A549 (cell line): ENCODE measurements at regions of chr11 and their contacts with region 1.

Region 1: DNA sequence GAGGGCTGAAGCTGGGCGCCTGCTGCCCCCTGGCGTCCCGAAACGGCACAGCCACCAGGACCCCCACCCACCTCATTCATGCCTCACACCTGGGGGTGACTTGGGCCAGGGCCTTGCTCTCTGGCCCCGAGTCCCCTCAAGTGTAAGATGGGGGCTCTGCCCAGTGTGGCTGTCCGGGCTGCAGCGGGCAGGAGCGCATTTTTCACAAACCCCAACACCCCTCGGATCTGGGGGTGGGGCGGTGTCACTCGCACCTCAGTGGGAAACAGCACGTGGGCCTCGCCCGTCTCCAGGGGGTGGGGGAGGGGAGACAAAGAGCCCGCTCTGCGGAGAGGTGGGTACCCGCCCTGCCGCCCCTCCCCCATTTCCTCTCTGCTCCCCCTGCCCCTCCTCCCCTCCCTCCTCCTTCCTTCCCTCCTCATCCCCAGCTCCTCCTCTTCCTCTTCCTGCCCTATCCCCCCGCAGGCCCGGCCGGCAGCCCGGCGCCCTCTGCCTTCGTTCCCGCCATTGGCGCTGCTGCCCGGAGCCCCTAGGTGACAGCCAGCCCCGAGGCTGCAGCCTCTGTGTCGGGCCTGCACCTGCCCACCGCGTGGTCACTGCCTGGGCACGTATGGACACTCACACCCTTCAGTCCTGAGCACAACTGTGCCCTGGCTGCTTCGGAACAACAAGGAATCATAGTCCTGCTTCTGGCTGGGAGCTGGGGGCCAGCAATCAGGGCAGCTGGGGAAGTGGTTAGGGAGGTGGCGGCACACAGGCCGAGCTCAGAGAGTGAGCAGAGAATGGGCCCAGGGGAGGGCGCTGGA is 6.8 kb upstream of the CDKN1C start:
- DNase-seq: peak; percentile 49 to 74
- ATAC-seq: peak; percentile 42 to 74
- H3K4me3 ChIP-seq: peak overlapping the region; percentile 42
- H3K27ac ChIP-seq: peak overlapping the region; percentile 74 to 90
- H3K4me1 ChIP-seq: peaks cover 16% of the 10 kb centered on the region
- CTCF ChIP-seq: peak; percentile 83
- EP300 ChIP-seq: no peak
- POLR2A ChIP-seq: peak; percentile 28; the same call in 1 of the 2 replicates
- RAD21 ChIP-seq: peak; percentile 81 to 83

Region 2: GRCh38 chr11:2428322-2428795 is 464.1 kb before region 1 on chr11:
- CTCF ChIA-PET with region 1: interaction called, 31 read pairs
- POLR2A ChIA-PET with region 1: no interaction called
- DNase-seq: peak; percentile 56 to 68
- ATAC-seq: peak; percentile 49 to 92; a peak in 3 of 6 replicates
- H3K4me3 ChIP-seq: no peak overlapping the region
- H3K27ac ChIP-seq: no peak overlapping the region
- H3K4me1 ChIP-seq: no peaks in the 10 kb centered on the region
- CTCF ChIP-seq: peak; percentile 62
- EP300 ChIP-seq: no peak
- POLR2A ChIP-seq: no peak
- RAD21 ChIP-seq: peak; percentile 87 to 95

Region 3: DNA sequence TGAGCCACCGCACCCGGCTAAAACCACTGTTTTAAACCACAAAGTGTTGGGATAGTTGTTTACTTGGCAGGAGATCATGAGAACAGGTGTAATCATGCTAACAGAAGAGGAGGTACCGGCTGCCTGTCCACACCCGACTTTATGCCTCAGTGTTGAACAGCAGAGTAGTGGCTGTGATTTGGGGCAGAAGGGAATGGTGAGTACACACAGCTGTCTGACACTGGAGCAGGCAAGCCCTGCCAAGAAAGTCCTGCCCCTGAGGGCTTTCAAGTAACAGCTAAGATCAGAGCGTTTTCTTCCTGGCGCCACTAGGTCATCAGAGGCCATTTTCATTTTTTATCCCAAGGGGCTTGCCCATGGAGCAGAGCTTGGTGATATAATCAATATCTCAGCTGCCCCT is 14.9 kb before region 1 on chr11:
- CTCF ChIA-PET with region 1: interaction called, 25 read pairs
- POLR2A ChIA-PET with region 1: no interaction called
- DNase-seq: no peak
- ATAC-seq: no peak
- H3K4me3 ChIP-seq: no peak overlapping the region
- H3K27ac ChIP-seq: no peak overlapping the region
- H3K4me1 ChIP-seq: no peaks in the 10 kb centered on the region
- CTCF ChIP-seq: no peak
- EP300 ChIP-seq: no peak
- POLR2A ChIP-seq: no peak
- RAD21 ChIP-seq: no peak

Region 4: GRCh38 chr11:2924381-2924780 is 32.0 kb after region 1 on chr11:
- CTCF ChIA-PET with region 1: interaction called, 57 read pairs
- POLR2A ChIA-PET with region 1: interaction called, 41 read pairs
- DNase-seq: peak in 1 of 2 experiments; percentile 31
- ATAC-seq: peak in 1 of 2 experiments; percentile 4; a peak in 3 of 6 replicates
- H3K4me3 ChIP-seq: no peak overlapping the region
- H3K27ac ChIP-seq: peak overlapping the region in 1 of 2 experiments; percentile 22; a peak in 2 of 6 replicates
- H3K4me1 ChIP-seq: peaks cover 25% of the 10 kb centered on the region
- CTCF ChIP-seq: no peak
- EP300 ChIP-seq: no peak
- POLR2A ChIP-seq: no peak
- RAD21 ChIP-seq: no peak

Region 5: DNA sequence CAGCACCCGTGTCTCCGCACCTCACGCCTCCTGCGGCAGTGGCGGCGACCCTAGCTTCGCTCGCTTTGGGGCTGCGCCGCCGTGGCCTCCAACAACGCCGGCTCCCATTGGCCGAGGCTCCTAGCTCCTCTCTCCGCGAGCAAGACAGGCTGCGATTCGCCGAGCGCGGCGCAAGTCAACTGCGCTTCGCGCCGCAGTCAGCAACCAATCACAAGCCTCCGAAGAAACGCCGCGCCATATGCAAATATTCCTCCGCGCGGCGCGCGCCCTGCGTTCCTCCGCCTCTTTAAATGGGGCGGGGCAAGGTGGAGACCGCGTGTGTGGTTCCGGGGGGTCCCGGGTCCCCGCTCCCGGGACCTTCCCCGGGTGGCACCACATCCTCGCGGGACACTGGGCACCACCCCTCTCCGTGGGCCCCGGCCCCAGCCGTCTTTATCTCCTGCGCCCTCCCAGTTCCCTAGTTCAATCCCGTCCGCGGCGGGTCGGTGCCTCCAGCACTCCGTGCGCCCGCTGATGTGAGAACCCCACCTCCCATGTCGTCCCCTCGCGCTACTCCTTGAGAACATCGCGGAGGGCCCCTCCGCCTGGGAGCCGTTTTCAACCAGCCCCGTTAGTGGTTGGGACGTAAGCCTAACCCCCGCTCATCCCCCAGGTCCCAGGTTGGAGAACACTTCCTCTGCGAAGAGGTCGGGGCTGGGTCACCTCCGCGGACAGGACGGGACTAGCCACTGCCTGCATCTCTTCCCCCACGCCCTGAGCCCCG is 100.0 kb after region 1 on chr11 and contains the start of gene NAP1L4:
- CTCF ChIA-PET with region 1: no interaction called
- POLR2A ChIA-PET with region 1: no interaction called
- DNase-seq: peak; percentile 98 to 100
- ATAC-seq: peak; percentile 90 to 93
- H3K4me3 ChIP-seq: peak within 1 kb of the TSS; percentile 68
- H3K27ac ChIP-seq: peak within 1 kb of the TSS; percentile 95 to 99
- H3K4me1 ChIP-seq: peaks cover 32% of the 10 kb centered on the region
- CTCF ChIP-seq: no peak
- EP300 ChIP-seq: no peak
- POLR2A ChIP-seq: peak; percentile 70
- RAD21 ChIP-seq: no peak
- polyA plus RNA-seq, gene NAP1L4: 128 and 148 TPM in 2 replicates